Heart right ventricle (tissue), 16 donors: ENCODE measurements at regions of chr7 and their contacts with region 1.

Region 1: DNA sequence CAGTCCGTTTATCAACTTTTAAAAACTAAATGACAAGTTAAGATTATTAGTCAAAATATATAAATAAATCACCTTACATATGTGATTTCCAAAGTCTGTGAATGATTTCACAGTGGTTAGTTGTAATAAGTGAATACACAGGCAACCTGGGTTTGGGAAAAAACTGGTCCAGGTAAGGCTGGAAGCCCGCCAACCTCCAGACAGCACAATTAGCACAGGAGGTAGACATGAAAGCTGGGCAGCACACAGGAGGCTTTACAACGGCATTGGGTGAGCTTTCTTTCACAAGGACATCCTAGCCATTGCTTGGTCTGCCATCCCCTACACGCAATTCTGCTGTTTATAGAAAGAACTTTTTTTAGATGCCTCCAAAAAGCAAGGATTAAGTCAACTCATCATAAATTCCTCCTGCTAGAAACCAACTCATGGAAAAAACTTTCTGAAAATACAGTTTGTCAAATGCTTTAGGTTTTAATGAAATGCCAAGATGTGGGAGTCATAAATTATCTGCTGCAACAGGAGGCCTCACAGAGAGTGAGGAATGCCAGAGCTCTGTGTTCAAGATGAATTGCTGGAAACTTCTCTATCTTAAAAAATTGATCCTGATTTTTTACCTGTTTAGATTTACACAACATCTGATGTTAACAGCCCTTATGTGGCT is 346.8 kb upstream of the NFE2L3 start:
- DNase-seq: no peak
- ATAC-seq: no peak
- H3K4me3 ChIP-seq: no peak overlapping the region
- H3K27ac ChIP-seq: no peak overlapping the region
- H3K4me1 ChIP-seq: no peaks in the 10 kb centered on the region
- H3K27me3 ChIP-seq: peaks cover 0 to 5% (median 0%) of the 10 kb centered on the region in 7 donors
- CTCF ChIP-seq: no peak

Region 2: GRCh38 chr7:25735674-25736242 is 69.4 kb before region 1 on chr7:
- intact Hi-C with region 1: loop called in 1 of 10 experiments (anchors 2 kb)
- DNase-seq: no peak
- ATAC-seq: no peak
- H3K4me3 ChIP-seq: no peak overlapping the region
- H3K27ac ChIP-seq: no peak overlapping the region
- H3K4me1 ChIP-seq: peaks cover 0 to 17% (median 7%) of the 10 kb centered on the region in 9 donors
- H3K27me3 ChIP-seq: no peaks in the 10 kb centered on the region
- CTCF ChIP-seq: no peak

Region 3: GRCh38 chr7:25913598-25914224 is 108.6 kb after region 1 on chr7:
- intact Hi-C with region 1: no loop called
- DNase-seq: no peak
- ATAC-seq: no peak
- H3K4me3 ChIP-seq: no peak overlapping the region
- H3K27ac ChIP-seq: no peak overlapping the region
- H3K4me1 ChIP-seq: no peaks in the 10 kb centered on the region
- H3K27me3 ChIP-seq: peaks cover 0 to 52% (median 26%) of the 10 kb centered on the region in 7 donors
- CTCF ChIP-seq: no peak